ENCODE measurements at regions of chr17 and their contacts with region 1.

Region 1: GRCh38 chr17:59004338-59005111 is 102.2 kb downstream of the TRIM37 start:
- DNase-seq: peak; percentile 17 to 73 (median 60)
- ATAC-seq: peak; percentile 73
- H3K4me3 ChIP-seq: no peak overlapping the region
- H3K4me3 Mint-ChIP-seq: peak overlapping the region in 2 of 10 donors; percentile 9 to 12
- H3K27ac ChIP-seq: no peak overlapping the region
- H3K27ac Mint-ChIP-seq: peak overlapping the region; percentile 50 to 86 (median 84)
- H3K4me1 ChIP-seq: peaks cover 5 to 6% of the 10 kb centered on the region in 2 donors
- H3K4me1 Mint-ChIP-seq: peaks cover 5 to 32% (median 20%) of the 10 kb centered on the region in 7 donors
- H3K27me3 ChIP-seq: no peaks in the 10 kb centered on the region
- H3K27me3 Mint-ChIP-seq: no peaks in the 10 kb centered on the region

Region 2: DNA sequence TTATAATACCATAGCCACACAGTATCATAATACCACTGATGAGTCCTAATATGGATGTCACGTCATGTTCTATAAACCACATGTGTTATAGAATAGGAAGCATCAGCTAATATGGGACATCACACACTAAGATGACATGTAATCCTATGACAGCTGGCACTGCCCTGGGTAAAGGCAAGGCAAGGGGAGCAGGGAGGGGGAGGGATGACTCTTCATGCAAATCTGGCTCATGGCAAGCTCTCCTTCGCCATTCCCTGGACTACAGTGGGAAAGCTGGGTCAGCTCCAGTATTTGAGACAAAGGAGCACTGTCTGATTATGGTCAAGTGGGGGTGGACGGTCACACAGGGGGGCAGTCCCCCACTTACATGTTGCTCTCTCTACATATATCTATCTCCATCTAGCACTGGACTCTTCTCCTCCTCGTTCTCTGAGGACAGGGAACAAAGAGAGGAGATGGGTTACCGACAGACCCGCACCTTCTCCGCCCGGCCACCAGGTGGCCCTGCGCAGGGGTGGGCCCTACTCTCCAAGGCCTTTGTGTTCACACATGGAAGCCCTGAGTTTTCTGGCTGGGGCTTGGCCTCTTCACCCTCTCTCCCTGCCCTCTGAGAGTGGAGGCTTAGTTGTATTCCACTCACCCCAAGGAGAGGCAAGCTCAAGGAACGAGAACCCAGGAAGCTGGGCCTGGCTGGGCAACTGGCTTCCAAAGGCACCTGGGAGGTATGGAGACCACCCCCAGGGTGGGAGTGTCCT is 700.4 kb before region 1 on chr17:
- CTCF ChIA-PET with region 1: interaction called, 3 read pairs
- POLR2A ChIA-PET with region 1: no interaction called
- intact Hi-C with region 1: loop called in 1 of 2 experiments (anchors 1 kb)
- DNase-seq: peak in 8 of 9 donors; percentile 32 to 63 (median 53)
- ATAC-seq: peak; percentile 89
- H3K4me3 ChIP-seq: no peak overlapping the region
- H3K4me3 Mint-ChIP-seq: peak overlapping the region in 1 of 10 donors; percentile 38
- H3K27ac ChIP-seq: no peak overlapping the region
- H3K27ac Mint-ChIP-seq: peak overlapping the region in 1 of 9 donors; percentile 46
- H3K4me1 ChIP-seq: peaks cover 0 to 6% of the 10 kb centered on the region in 2 donors
- H3K4me1 Mint-ChIP-seq: peaks cover 0 to 7% (median 4%) of the 10 kb centered on the region in 7 donors
- H3K27me3 ChIP-seq: no peaks in the 10 kb centered on the region
- H3K27me3 Mint-ChIP-seq: peaks cover 0 to 5% (median 0%) of the 10 kb centered on the region in 5 donors

Region 3: GRCh38 chr17:58344047-58344790 is 660.3 kb before region 1 on chr17:
- CTCF ChIA-PET with region 1: no interaction called
- POLR2A ChIA-PET with region 1: no interaction called
- intact Hi-C with region 1: loop called in 1 of 2 experiments (anchors 2 kb)
- DNase-seq: peak; percentile 48 to 96 (median 80)
- ATAC-seq: peak; percentile 91
- H3K4me3 ChIP-seq: peak overlapping the region; percentile 64
- H3K4me3 Mint-ChIP-seq: peak overlapping the region; percentile 80 to 100 (median 88)
- H3K27ac ChIP-seq: peak overlapping the region; percentile 98
- H3K27ac Mint-ChIP-seq: peak overlapping the region; percentile 91 to 100 (median 95)
- H3K4me1 ChIP-seq: peaks cover 72 to 78% of the 10 kb centered on the region in 2 donors
- H3K4me1 Mint-ChIP-seq: peaks cover 54 to 100% (median 87%) of the 10 kb centered on the region in 7 donors
- H3K27me3 ChIP-seq: no peaks in the 10 kb centered on the region
- H3K27me3 Mint-ChIP-seq: no peaks in the 10 kb centered on the region

Region 4: DNA sequence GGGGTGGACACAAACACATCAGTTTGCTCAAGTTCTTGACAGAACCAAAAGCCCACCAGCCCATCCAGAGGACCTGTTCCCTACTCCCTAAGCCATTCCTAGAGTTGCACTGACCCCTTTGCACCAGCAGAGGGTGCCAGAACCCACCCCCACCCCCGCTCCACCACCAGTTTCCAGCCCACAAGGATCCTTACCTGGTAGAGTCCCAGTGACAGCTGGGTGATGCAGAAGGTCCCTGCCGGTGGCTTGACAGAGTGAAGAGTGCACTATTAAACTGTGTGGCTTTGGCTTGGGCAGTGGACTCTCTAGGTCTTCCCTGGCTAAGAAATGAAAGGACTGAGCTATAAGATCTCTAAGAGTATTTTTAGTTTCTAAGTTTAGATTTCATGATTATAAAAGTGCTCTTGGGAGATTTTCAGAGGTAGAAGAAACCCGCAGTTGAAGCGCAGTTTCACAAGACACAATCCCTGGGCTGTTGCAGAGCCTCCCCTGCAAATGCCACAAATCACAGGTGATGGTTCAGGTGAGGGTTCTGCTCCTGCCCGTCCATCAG is 416.7 kb before region 1 on chr17:
- CTCF ChIA-PET with region 1: interaction called, 12 read pairs
- POLR2A ChIA-PET with region 1: interaction called, 6 read pairs
- intact Hi-C with region 1: loop called (anchors 1 kb)
- DNase-seq: peak; percentile 16 to 60 (median 46)
- ATAC-seq: peak; percentile 86
- H3K4me3 ChIP-seq: no peak overlapping the region
- H3K4me3 Mint-ChIP-seq: no peak overlapping the region
- H3K27ac ChIP-seq: no peak overlapping the region
- H3K27ac Mint-ChIP-seq: no peak overlapping the region
- H3K4me1 ChIP-seq: no peaks in the 10 kb centered on the region
- H3K4me1 Mint-ChIP-seq: peaks cover 0 to 2% (median 0%) of the 10 kb centered on the region in 7 donors
- H3K27me3 ChIP-seq: no peaks in the 10 kb centered on the region
- H3K27me3 Mint-ChIP-seq: peaks cover 0 to 5% (median 3%) of the 10 kb centered on the region in 5 donors

Region 5: GRCh38 chr17:58692239-58693055 is 312.1 kb before region 1 on chr17 and contains the start of gene RAD51C:
- CTCF ChIA-PET with region 1: no interaction called
- POLR2A ChIA-PET with region 1: no interaction called
- intact Hi-C with region 1: loop called (anchors 1 to 5 kb)
- DNase-seq: peak; percentile 66 to 86 (median 82)
- ATAC-seq: peak; percentile 99
- H3K4me3 ChIP-seq: peak within 1 kb of the TSS; percentile 75
- H3K4me3 Mint-ChIP-seq: peak within 1 kb of the TSS; percentile 85 to 99 (median 94)
- H3K27ac ChIP-seq: peak within 1 kb of the TSS; percentile 77
- H3K27ac Mint-ChIP-seq: peak within 1 kb of the TSS; percentile 87 to 96 (median 89)
- H3K4me1 ChIP-seq: peaks cover 12 to 17% of the 10 kb centered on the region in 2 donors
- H3K4me1 Mint-ChIP-seq: peaks cover 20 to 37% (median 31%) of the 10 kb centered on the region in 7 donors
- H3K27me3 ChIP-seq: no peaks in the 10 kb centered on the region
- H3K27me3 Mint-ChIP-seq: peaks cover 0 to 2% (median 0%) of the 10 kb centered on the region in 5 donors
- total RNA-seq, gene RAD51C: 11.4 to 52.6 (median 27.8) TPM

Region 6: GRCh38 chr17:58947824-58948223 is 56.7 kb before region 1 on chr17:
- CTCF ChIA-PET with region 1: no interaction called
- POLR2A ChIA-PET with region 1: no interaction called
- intact Hi-C with region 1: no loop called
- DNase-seq: no peak
- ATAC-seq: no peak
- H3K4me3 ChIP-seq: no peak overlapping the region
- H3K4me3 Mint-ChIP-seq: no peak overlapping the region
- H3K27ac ChIP-seq: no peak overlapping the region
- H3K27ac Mint-ChIP-seq: no peak overlapping the region
- H3K4me1 ChIP-seq: no peaks in the 10 kb centered on the region
- H3K4me1 Mint-ChIP-seq: peaks cover 0 to 4% (median 0%) of the 10 kb centered on the region in 7 donors
- H3K27me3 ChIP-seq: no peaks in the 10 kb centered on the region
- H3K27me3 Mint-ChIP-seq: peaks cover 9 to 24% (median 17%) of the 10 kb centered on the region in 5 donors

Measured in naive thymus-derived CD4-positive, alpha-beta T cell (primary cell).